Caco-2 (cell line): ENCODE measurements at regions of chr13 and their contacts with region 1.

Region 1: GRCh38 chr13:48233046-48233907 is at the start of gene ITM2B:
- DNase-seq: peak; percentile 79 to 82
- H3K4me3 ChIP-seq: peak within 1 kb of the TSS; percentile 91
- H3K4me3 Mint-ChIP-seq: peak within 1 kb of the TSS; percentile 89
- H3K27ac Mint-ChIP-seq: peak within 1 kb of the TSS; percentile 90
- H3K4me1 ChIP-seq: peaks cover 15% of the 10 kb centered on the region; the same call in 1 of the 2 replicates
- H3K4me1 Mint-ChIP-seq: peaks cover 13% of the 10 kb centered on the region
- H3K27me3 ChIP-seq: no peaks in the 10 kb centered on the region
- H3K27me3 Mint-ChIP-seq: no peaks in the 10 kb centered on the region
- CTCF ChIP-seq: peak; percentile 23 to 28
- total RNA-seq, gene ITM2B: 202 and 224 TPM in 2 replicates

Region 2: DNA sequence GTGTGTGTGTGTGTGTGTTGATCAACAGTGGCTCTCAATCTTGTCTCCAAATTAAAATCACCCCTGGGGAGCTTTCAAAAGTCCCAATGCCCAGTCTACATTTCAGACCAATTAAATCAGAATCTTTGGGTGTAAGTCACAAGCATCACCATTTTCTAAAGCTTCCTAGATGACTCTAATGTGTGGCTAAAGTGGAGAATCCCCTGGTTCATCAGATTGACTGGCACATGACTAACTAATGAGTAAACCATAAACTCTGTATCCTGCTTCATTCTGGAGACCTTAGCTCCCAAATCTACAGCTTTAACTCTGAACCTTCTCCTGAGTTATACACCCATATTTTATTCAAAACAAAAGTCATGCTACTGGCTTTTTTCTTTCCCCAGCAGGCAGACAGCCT is 363.5 kb before region 1 on chr13:
- CTCF ChIA-PET with region 1: no interaction called
- POLR2A ChIA-PET with region 1: no interaction called
- intact Hi-C with region 1: no loop called
- DNase-seq: no peak
- H3K4me3 ChIP-seq: no peak overlapping the region
- H3K4me3 Mint-ChIP-seq: no peak overlapping the region
- H3K27ac Mint-ChIP-seq: no peak overlapping the region
- H3K4me1 ChIP-seq: no peaks in the 10 kb centered on the region
- H3K4me1 Mint-ChIP-seq: no peaks in the 10 kb centered on the region
- H3K27me3 ChIP-seq: no peaks in the 10 kb centered on the region
- H3K27me3 Mint-ChIP-seq: no peaks in the 10 kb centered on the region
- CTCF ChIP-seq: no peak

Region 3: DNA sequence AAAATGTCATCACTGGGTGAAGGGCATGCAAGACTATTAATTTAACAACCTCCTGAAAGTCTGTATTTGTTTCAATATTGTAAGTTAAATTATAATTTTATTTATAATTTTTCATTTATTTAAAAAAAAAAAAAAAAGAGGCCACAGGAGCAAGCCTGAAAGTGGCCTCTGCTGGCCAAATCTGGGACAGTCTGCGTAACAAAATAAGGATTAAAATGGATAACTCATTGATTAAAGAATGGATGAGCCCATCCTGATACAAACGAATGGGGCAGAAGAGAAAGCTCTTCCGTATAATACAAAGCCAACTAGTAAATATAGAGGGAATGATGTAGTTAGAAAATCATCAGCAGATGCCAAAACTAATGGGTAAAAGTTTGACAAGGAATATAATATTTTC is 268.4 kb before region 1 on chr13:
- CTCF ChIA-PET with region 1: no interaction called
- POLR2A ChIA-PET with region 1: no interaction called
- intact Hi-C with region 1: no loop called
- DNase-seq: no peak
- H3K4me3 ChIP-seq: no peak overlapping the region
- H3K4me3 Mint-ChIP-seq: no peak overlapping the region
- H3K27ac Mint-ChIP-seq: no peak overlapping the region
- H3K4me1 ChIP-seq: no peaks in the 10 kb centered on the region
- H3K4me1 Mint-ChIP-seq: no peaks in the 10 kb centered on the region
- H3K27me3 ChIP-seq: no peaks in the 10 kb centered on the region
- H3K27me3 Mint-ChIP-seq: no peaks in the 10 kb centered on the region
- CTCF ChIP-seq: peak in 1 of 2 experiments; percentile 30

Region 4: GRCh38 chr13:48126944-48127830 is 106.1 kb before region 1 on chr13:
- CTCF ChIA-PET with region 1: no interaction called
- POLR2A ChIA-PET with region 1: interaction called, 3 read pairs
- intact Hi-C with region 1: loop called (anchors 2 kb)
- DNase-seq: peak in 1 of 2 experiments; percentile 61
- H3K4me3 ChIP-seq: no peak overlapping the region
- H3K4me3 Mint-ChIP-seq: no peak overlapping the region
- H3K27ac Mint-ChIP-seq: no peak overlapping the region
- H3K4me1 ChIP-seq: peaks cover 6% of the 10 kb centered on the region; the same call in 1 of the 2 replicates
- H3K4me1 Mint-ChIP-seq: no peaks in the 10 kb centered on the region
- H3K27me3 ChIP-seq: no peaks in the 10 kb centered on the region
- H3K27me3 Mint-ChIP-seq: no peaks in the 10 kb centered on the region
- CTCF ChIP-seq: peak; percentile 56 to 67

Region 5: GRCh38 chr13:48258002-48258401 is 24.7 kb after region 1 on chr13:
- CTCF ChIA-PET with region 1: no interaction called
- POLR2A ChIA-PET with region 1: interaction called, 5 read pairs
- intact Hi-C with region 1: loop called (anchors 2 kb)
- DNase-seq: peak in 1 of 2 experiments; percentile 43
- H3K4me3 ChIP-seq: no peak overlapping the region
- H3K4me3 Mint-ChIP-seq: no peak overlapping the region
- H3K27ac Mint-ChIP-seq: no peak overlapping the region
- H3K4me1 ChIP-seq: peaks cover 15% of the 10 kb centered on the region
- H3K4me1 Mint-ChIP-seq: peaks cover 14% of the 10 kb centered on the region
- H3K27me3 ChIP-seq: no peaks in the 10 kb centered on the region
- H3K27me3 Mint-ChIP-seq: no peaks in the 10 kb centered on the region
- CTCF ChIP-seq: no peak

Region 6: DNA sequence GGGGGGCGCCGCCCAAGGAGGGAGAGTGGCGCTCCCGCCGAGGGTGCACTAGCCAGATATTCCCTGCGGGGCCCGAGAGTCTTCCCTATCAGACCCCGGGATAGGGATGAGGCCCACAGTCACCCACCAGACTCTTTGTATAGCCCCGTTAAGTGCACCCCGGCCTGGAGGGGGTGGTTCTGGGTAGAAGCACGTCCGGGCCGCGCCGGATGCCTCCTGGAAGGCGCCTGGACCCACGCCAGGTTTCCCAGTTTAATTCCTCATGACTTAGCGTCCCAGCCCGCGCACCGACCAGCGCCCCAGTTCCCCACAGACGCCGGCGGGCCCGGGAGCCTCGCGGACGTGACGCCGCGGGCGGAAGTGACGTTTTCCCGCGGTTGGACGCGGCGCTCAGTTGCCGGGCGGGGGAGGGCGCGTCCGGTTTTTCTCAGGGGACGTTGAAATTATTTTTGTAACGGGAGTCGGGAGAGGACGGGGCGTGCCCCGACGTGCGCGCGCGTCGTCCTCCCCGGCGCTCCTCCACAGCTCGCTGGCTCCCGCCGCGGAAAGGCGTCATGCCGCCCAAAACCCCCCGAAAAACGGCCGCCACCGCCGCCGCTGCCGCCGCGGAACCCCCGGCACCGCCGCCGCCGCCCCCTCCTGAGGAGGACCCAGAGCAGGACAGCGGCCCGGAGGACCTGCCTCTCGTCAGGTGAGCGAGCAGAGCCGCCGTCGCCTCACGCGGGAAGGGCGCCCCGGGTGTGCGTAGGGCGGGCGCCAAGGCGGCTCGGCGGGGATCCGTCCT is 70.3 kb after region 1 on chr13 and contains the start of gene RB1:
- CTCF ChIA-PET with region 1: no interaction called
- POLR2A ChIA-PET with region 1: interaction called, 8 read pairs
- intact Hi-C with region 1: loop called (anchors 2 kb)
- DNase-seq: peak; percentile 81 to 88
- H3K4me3 ChIP-seq: peak within 1 kb of the TSS; percentile 76
- H3K4me3 Mint-ChIP-seq: peak within 1 kb of the TSS; percentile 82
- H3K27ac Mint-ChIP-seq: peak within 1 kb of the TSS; percentile 93
- H3K4me1 ChIP-seq: peaks cover 4% of the 10 kb centered on the region; the same call in 1 of the 2 replicates
- H3K4me1 Mint-ChIP-seq: peaks cover 6% of the 10 kb centered on the region
- H3K27me3 ChIP-seq: no peaks in the 10 kb centered on the region
- H3K27me3 Mint-ChIP-seq: no peaks in the 10 kb centered on the region
- CTCF ChIP-seq: no peak
- total RNA-seq, gene RB1: 24.1 and 24.3 TPM in 2 replicates